ENCODE measurements at regions of chr7 and their contacts with region 1.

Region 1: DNA sequence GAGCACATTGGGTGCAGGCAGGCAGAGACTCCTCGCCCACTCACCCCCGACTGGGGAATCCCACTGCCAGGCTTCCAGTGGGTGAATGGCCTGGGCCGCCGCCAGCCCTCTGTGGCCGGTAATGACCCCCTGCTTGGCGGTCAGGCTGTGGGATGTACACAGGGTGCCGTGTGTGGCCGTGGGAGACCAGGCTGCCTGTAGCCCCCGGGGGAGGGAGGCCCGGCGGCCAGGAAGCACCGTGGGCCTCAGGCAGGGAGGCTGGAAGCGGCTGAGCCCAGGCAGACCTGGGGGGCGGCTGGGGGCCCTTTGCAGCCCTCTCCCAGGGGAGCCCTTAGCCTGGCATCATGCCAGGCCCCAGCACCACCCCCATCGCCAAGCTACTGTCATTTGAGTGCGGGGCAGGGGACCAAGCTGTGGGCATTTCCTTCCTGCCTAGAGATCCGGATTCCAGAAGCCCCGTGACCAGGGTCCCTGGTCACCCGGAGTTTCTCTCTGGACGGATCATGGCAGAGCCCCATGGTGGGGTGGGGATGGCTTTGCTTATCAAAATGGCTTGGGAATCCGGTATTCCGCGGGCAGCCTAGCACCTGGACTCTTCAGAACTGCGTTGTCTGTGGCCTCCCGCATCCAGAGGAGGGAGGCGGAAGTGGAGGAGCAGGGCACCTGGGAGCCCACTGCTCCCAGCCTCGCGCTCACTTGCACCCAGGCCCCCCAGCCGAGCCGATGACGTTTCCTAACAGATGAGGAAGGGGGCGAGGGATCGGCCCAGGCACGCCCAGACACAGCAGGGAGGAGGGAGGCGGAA is 1.1 kb downstream of the TTYH3 start:
- DNase-seq: peak; percentile 36
- ATAC-seq: peak; percentile 45
- H3K4me3 ChIP-seq: peak overlapping the region; percentile 93
- H3K27ac ChIP-seq: peak overlapping the region; percentile 65
- H3K4me1 ChIP-seq: peaks cover 16% of the 10 kb centered on the region
- H3K27me3 ChIP-seq: no peaks in the 10 kb centered on the region
- CTCF ChIP-seq: no peak

Region 2: DNA sequence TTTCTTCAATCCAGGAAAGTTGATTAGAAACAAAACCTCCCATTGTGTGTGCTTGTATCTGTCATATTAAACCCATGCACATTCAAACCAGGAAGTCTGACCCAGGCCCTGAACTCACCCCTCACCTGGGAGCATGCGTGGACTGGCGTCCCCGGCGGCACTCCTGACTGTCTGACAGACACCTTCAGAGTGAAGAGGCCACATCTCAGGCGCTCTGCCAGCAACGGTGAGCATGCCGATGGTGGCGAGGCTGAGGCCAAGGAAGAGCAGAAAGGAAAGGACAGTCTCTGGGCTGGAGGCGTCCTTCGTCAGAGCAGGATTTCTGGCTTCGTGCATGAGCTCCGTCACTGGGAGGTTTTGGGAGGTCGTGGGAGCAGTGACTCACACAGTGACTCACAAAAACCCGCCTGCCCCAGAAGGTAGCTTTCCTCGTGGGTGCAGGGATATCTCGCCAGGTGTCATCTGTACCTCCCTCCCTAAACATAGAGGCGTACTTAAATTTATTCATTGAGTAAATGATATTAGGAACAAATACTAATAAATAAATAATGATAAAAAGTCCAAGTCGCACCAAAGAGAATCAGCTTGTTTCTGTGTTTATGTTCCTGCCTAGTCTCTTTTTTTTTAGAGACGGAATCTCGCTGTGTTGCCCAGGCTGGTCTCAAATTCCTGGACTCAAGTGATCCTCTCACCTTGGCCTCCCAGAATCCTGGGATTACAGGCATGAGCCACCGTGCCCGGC is 60.7 kb before region 1 on chr7:
- CTCF ChIA-PET with region 1: no interaction called
- POLR2A ChIA-PET with region 1: no interaction called
- intact Hi-C with region 1: loop called (anchors 5 kb)
- DNase-seq: peak; percentile 80
- ATAC-seq: peak; percentile 86
- H3K4me3 ChIP-seq: peak overlapping the region; percentile 52
- H3K27ac ChIP-seq: peak overlapping the region; percentile 86
- H3K4me1 ChIP-seq: peaks cover 17% of the 10 kb centered on the region
- H3K27me3 ChIP-seq: no peaks in the 10 kb centered on the region
- CTCF ChIP-seq: no peak

Region 3: GRCh38 chr7:2597273-2597640 is 35.7 kb before region 1 on chr7:
- CTCF ChIA-PET with region 1: no interaction called
- POLR2A ChIA-PET with region 1: no interaction called
- intact Hi-C with region 1: no loop called
- DNase-seq: no peak
- ATAC-seq: no peak
- H3K4me3 ChIP-seq: no peak overlapping the region
- H3K27ac ChIP-seq: no peak overlapping the region
- H3K4me1 ChIP-seq: peaks cover 5% of the 10 kb centered on the region
- H3K27me3 ChIP-seq: no peaks in the 10 kb centered on the region
- CTCF ChIP-seq: no peak

Region 4: GRCh38 chr7:2608921-2609411 is 24.0 kb before region 1 on chr7:
- CTCF ChIA-PET with region 1: interaction called, 4 read pairs
- POLR2A ChIA-PET with region 1: interaction called, 20 read pairs
- intact Hi-C with region 1: no loop called
- DNase-seq: peak; percentile 22
- ATAC-seq: peak; percentile 48
- H3K4me3 ChIP-seq: no peak overlapping the region
- H3K27ac ChIP-seq: no peak overlapping the region
- H3K4me1 ChIP-seq: no peaks in the 10 kb centered on the region
- H3K27me3 ChIP-seq: no peaks in the 10 kb centered on the region
- CTCF ChIP-seq: peak; percentile 51

Region 5: DNA sequence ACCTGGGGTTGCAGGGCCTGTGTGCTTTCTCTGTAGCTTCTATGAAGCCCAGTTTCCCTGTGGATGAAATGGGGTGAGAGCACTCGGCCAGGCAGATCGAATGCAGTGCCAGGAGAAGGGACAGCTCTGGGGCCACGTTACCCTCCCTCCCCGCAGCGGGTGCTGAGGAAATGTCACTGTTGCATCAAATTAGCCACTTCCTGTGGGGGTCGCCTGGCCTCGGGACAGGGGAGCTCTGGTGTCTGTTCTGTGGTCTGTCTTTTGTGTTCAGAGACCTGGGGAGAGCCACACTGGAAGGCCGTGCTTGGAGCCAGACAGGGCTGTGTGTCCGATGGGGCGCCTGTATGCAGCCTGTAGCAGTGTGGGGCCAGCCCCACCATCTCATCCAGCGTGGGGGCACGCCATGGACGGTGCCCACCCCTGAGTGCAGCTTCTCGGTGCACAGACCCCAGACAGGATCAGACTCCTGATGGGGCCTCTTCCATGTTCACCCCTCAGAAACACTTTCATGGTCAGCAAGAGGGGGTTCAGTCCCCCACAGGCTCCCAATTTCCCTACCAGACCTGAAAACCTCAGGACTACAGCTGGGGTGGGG is 12.4 kb after region 1 on chr7:
- CTCF ChIA-PET with region 1: no interaction called
- POLR2A ChIA-PET with region 1: no interaction called
- intact Hi-C with region 1: no loop called
- DNase-seq: no peak
- ATAC-seq: no peak
- H3K4me3 ChIP-seq: no peak overlapping the region
- H3K27ac ChIP-seq: no peak overlapping the region
- H3K4me1 ChIP-seq: no peaks in the 10 kb centered on the region
- H3K27me3 ChIP-seq: no peaks in the 10 kb centered on the region
- CTCF ChIP-seq: no peak

Region 6: DNA sequence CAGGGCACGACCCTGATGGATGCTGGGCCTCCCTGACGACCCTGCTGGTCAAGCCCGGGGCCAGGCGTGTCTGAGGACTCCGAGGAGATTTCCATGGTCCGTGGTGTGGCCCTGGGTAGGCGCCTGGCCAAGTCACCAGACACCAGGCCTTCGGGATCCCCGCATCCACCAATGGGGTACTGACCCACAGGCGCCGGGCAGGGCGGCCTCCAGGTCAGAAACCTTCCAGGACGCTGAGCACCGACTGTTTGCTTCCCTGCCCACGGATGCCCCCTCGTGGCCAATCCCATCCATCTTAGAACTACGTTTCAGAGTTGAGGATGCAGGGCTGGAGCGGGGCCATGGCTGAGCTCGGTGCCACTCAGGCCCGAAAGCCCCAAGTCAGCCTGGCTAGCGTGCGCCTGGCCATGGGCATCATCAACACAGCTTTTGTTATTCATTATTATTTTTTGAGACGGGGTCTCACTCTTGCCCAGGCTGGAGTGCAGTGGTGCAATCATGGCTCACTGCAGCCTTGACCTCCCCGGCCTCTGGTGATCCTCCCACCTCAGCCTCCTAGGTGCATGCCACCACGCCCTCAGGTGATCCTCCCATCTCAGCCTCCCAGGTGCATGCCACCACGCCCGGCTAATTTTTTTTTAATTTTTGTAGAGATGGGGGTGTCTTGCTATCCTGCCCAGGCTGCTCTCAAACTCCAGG is 48.0 kb after region 1 on chr7:
- CTCF ChIA-PET with region 1: no interaction called
- POLR2A ChIA-PET with region 1: no interaction called
- intact Hi-C with region 1: no loop called
- DNase-seq: peak; percentile 79
- ATAC-seq: peak; percentile 88
- H3K4me3 ChIP-seq: no peak overlapping the region
- H3K27ac ChIP-seq: no peak overlapping the region
- H3K4me1 ChIP-seq: no peaks in the 10 kb centered on the region
- H3K27me3 ChIP-seq: no peaks in the 10 kb centered on the region
- CTCF ChIP-seq: peak; percentile 74

Region 7: GRCh38 chr7:4519819-4520525 is 1887.0 kb after region 1 on chr7:
- CTCF ChIA-PET with region 1: no interaction called
- POLR2A ChIA-PET with region 1: interaction called, 27 read pairs
- intact Hi-C with region 1: no loop called
- DNase-seq: no peak
- ATAC-seq: no peak
- H3K4me3 ChIP-seq: no peak overlapping the region
- H3K27ac ChIP-seq: no peak overlapping the region
- H3K4me1 ChIP-seq: no peaks in the 10 kb centered on the region
- H3K27me3 ChIP-seq: peaks cover 43% of the 10 kb centered on the region
- CTCF ChIP-seq: no peak